ENCODE measurements at regions of chr13 and their contacts with region 1.

Region 1: DNA sequence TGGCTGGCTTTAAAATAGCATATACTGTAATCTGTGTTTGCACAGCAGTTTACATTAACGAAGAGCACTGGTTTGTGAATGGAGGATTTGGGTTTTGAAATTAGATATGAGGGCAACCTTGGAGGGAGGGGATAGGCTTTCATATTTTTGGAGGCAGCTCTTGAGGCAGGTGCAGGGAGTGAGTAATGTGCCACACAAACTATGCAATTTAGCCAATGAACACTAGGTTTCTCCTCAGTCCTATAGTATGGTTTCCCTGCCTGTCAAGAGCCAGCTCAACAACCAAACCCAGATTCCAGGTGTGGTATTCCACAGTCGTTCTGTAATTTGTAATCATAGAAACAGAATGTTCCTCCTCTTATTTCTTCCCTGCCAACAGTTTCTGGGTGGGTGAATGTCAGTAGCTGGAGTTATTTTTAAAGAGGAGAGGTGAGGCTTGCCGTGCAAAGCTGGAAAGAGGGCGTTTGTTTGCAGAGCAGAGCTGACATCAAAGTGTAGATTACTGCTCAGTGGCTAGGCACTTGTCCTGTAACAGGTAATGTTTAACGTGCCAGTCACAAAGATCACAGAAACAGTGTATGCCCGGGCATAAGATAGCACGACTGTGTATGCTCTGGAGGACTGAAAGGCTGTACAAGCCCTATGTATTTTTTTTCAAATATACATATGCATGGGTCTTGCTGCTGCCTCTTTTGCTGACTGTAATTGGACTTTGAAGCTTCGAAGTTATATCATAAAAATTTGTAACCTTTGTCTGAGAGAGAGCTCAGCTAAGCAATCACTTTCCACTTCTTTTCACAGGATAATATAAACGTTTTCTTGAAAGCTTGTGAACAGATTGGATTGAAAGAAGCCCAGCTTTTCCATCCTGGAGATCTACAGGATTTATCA is 124.2 kb downstream of the LMO7 start:
- DNase-seq: no peak
- H3K4me3 Mint-ChIP-seq: peak overlapping the region; percentile 76
- H3K27ac Mint-ChIP-seq: peak overlapping the region; percentile 49
- H3K4me1 Mint-ChIP-seq: peaks cover 71% of the 10 kb centered on the region
- H3K27me3 Mint-ChIP-seq: no peaks in the 10 kb centered on the region

Region 2: GRCh38 chr13:75365724-75366173 is 394.6 kb before region 1 on chr13:
- intact Hi-C with region 1: loop called (anchors 5 kb)
- DNase-seq: peak; percentile 43
- H3K4me3 Mint-ChIP-seq: peak overlapping the region; percentile 65
- H3K27ac Mint-ChIP-seq: peak overlapping the region; percentile 96
- H3K4me1 Mint-ChIP-seq: peaks cover 57% of the 10 kb centered on the region
- H3K27me3 Mint-ChIP-seq: no peaks in the 10 kb centered on the region

Region 3: GRCh38 chr13:75537401-75538365 is 222.7 kb before region 1 on chr13 and contains the start of gene COMMD6:
- intact Hi-C with region 1: loop called (anchors 5 kb)
- DNase-seq: peak; percentile 60
- H3K4me3 Mint-ChIP-seq: peak within 1 kb of the TSS; percentile 94
- H3K27ac Mint-ChIP-seq: peak within 1 kb of the TSS; percentile 87
- H3K4me1 Mint-ChIP-seq: peaks cover 44% of the 10 kb centered on the region
- H3K27me3 Mint-ChIP-seq: no peaks in the 10 kb centered on the region
- total RNA-seq, gene COMMD6: 87.1 and 88.7 TPM in 2 replicates

Region 4: DNA sequence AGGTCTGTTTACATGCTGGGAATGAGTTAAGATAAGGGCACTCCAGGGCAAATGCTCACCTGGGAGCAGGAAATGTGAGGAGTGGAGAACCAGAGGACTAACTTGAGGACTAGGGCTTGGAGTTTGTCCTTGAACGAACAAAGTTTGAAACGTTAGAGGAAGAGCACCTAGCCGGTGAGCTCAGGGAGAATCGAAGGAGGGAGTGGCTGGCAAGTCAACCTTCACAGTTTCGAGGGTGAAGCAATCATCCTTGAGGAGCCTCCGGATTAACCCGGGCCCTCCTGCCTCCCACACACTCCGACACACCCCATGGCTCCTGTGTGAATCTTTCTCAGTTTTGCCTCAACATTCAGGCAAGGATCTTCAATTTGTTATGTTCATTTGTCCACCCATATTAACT is 65.7 kb before region 1 on chr13:
- intact Hi-C with region 1: loop called (anchors 5 kb)
- DNase-seq: no peak
- H3K4me3 Mint-ChIP-seq: no peak overlapping the region
- H3K27ac Mint-ChIP-seq: no peak overlapping the region
- H3K4me1 Mint-ChIP-seq: no peaks in the 10 kb centered on the region
- H3K27me3 Mint-ChIP-seq: peaks cover 3% of the 10 kb centered on the region

Region 5: DNA sequence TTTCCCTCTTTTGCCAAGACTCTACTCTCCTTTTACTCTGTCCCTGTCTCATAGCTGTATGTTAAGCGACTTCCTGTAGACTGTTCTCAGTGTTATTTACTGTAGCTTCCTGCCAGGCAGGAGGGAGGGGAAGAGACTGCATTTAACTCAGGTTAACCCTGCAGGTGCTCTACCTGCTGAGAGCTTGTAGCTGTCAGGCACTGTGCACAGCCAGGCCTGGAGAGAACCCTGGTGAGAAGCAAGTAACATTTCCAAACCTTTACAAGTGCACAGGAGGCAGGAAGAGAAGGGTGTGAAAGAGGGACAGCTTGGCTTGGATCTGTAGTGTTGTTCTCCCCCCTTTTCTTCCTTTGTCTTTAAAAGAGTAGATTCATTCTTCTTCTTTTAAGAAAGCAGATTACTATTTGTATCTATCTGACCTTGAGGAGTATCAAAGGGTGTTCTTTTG is 42.8 kb after region 1 on chr13:
- intact Hi-C with region 1: loop called (anchors 2 kb)
- DNase-seq: no peak
- H3K4me3 Mint-ChIP-seq: no peak overlapping the region
- H3K27ac Mint-ChIP-seq: peak overlapping the region; percentile 2
- H3K4me1 Mint-ChIP-seq: peaks cover 41% of the 10 kb centered on the region
- H3K27me3 Mint-ChIP-seq: no peaks in the 10 kb centered on the region

Region 6: DNA sequence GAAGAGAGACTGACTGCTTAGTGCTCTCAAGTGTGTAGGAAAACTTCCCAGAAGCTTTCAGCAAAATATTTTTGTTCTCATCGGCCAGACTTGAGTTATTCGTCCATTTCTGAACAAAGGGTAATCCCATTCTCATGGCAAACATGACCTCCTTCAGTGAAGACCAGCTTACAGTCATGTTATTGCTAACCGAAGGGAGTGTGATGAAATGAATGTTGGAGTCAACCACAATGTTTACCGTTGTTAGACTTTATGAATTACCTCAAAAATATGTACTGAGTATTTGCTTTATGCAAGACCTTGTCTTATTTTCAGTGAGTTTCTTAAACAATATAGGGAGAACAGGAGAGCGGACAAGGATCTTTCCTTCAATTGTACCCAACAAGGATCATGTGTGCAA is 104.3 kb after region 1 on chr13:
- intact Hi-C with region 1: no loop called
- DNase-seq: no peak
- H3K4me3 Mint-ChIP-seq: no peak overlapping the region
- H3K27ac Mint-ChIP-seq: no peak overlapping the region
- H3K4me1 Mint-ChIP-seq: peaks cover 2% of the 10 kb centered on the region
- H3K27me3 Mint-ChIP-seq: peaks cover 3% of the 10 kb centered on the region

Region 7: GRCh38 chr13:76225815-76226489 is 465.6 kb after region 1 on chr13:
- intact Hi-C with region 1: no loop called
- DNase-seq: no peak
- H3K4me3 Mint-ChIP-seq: no peak overlapping the region
- H3K27ac Mint-ChIP-seq: no peak overlapping the region
- H3K4me1 Mint-ChIP-seq: no peaks in the 10 kb centered on the region
- H3K27me3 Mint-ChIP-seq: no peaks in the 10 kb centered on the region

Region 8: GRCh38 chr13:76886292-76887075 is 1126.1 kb after region 1 on chr13 and contains the start of gene KCTD12:
- intact Hi-C with region 1: loop called (anchors 10 kb)
- DNase-seq: peak; percentile 60
- H3K4me3 Mint-ChIP-seq: peak within 1 kb of the TSS; percentile 90
- H3K27ac Mint-ChIP-seq: peak within 1 kb of the TSS; percentile 85
- H3K4me1 Mint-ChIP-seq: peaks cover 28% of the 10 kb centered on the region
- H3K27me3 Mint-ChIP-seq: peaks cover 28% of the 10 kb centered on the region
- total RNA-seq, gene KCTD12: 10.4 and 10.7 TPM in 2 replicates